CD4-positive, alpha-beta T cell (primary cell): ENCODE measurements at regions of chr14 and their contacts with region 1.

Region 1: GRCh38 chr14:97707603-97708002 is 910.4 kb downstream of the VRK1 start:
- DNase-seq: peak in 5 of 14 experiments; percentile 18 to 65 (median 51)
- ATAC-seq: peak; percentile 14
- H3K4me3 ChIP-seq: no peak overlapping the region
- H3K4me3 Mint-ChIP-seq: peak overlapping the region; percentile 16
- H3K27ac ChIP-seq: peak overlapping the region in 1 of 2 donors; percentile 29
- H3K27ac Mint-ChIP-seq: peak overlapping the region; percentile 71
- H3K4me1 ChIP-seq: peaks cover 62% of the 10 kb centered on the region
- H3K4me1 Mint-ChIP-seq: peaks cover 100% of the 10 kb centered on the region
- H3K27me3 ChIP-seq: no peaks in the 10 kb centered on the region
- H3K27me3 Mint-ChIP-seq: no peaks in the 10 kb centered on the region
- CTCF ChIP-seq: no peak

Region 2: DNA sequence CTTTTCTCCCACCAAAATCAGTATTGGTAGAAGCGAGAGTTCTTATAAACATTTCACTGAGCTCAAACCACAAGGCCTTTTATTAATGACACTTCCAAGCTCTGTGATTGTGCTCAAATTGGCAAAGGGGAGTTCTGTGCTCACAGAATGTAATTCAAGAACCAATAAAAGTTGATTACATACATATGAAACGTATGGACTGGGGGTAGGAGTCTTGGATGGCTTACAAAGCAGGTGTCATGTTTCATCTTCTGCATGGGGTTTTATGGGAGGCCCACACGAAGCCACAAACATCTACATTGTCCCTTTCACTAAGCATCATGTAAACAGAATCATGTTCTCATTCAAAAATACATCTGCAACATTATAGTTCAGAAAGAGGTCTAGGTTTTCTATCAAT is 82.1 kb before region 1 on chr14:
- CTCF ChIA-PET with region 1: no interaction called
- POLR2A ChIA-PET with region 1: no interaction called
- intact Hi-C with region 1: loop called in 1 of 2 experiments (anchors 5 kb)
- DNase-seq: no peak
- ATAC-seq: no peak
- H3K4me3 ChIP-seq: no peak overlapping the region
- H3K4me3 Mint-ChIP-seq: no peak overlapping the region
- H3K27ac ChIP-seq: no peak overlapping the region
- H3K27ac Mint-ChIP-seq: peak overlapping the region; percentile 24
- H3K4me1 ChIP-seq: peaks cover 8% of the 10 kb centered on the region
- H3K4me1 Mint-ChIP-seq: peaks cover 36% of the 10 kb centered on the region
- H3K27me3 ChIP-seq: no peaks in the 10 kb centered on the region
- H3K27me3 Mint-ChIP-seq: no peaks in the 10 kb centered on the region
- CTCF ChIP-seq: no peak

Region 3: DNA sequence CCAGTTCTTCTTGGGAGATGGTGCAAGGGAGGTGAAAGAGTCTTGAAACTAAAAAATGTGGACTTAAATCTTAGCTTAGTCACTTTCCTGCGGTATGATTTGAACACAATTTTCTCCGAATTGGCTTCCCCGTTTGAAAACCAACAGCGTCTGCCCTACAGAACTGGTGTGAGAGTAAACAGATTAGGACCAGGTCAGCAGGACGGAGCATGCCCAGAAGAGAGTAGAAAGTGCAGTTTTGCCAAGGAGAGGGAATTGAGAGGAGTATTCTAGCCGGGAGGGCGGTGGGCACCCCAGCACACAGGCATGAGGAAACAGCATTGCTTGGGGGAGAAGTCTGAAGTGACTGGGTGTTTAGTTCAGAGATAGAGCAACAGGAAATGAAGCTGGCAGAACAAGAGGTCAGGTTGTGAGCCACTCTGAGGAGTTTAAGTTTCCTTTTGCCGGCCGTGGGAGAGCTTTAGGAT is 16.7 kb after region 1 on chr14:
- CTCF ChIA-PET with region 1: no interaction called
- POLR2A ChIA-PET with region 1: interaction called, 16 read pairs
- intact Hi-C with region 1: no loop called
- DNase-seq: peak in 13 of 14 experiments; percentile 9 to 76 (median 37)
- ATAC-seq: peak; percentile 80
- H3K4me3 ChIP-seq: peak overlapping the region; percentile 36
- H3K4me3 Mint-ChIP-seq: peak overlapping the region; percentile 85
- H3K27ac ChIP-seq: peak overlapping the region; percentile 75 to 80
- H3K27ac Mint-ChIP-seq: peak overlapping the region; percentile 94
- H3K4me1 ChIP-seq: peaks cover 54% of the 10 kb centered on the region
- H3K4me1 Mint-ChIP-seq: peaks cover 90% of the 10 kb centered on the region
- H3K27me3 ChIP-seq: no peaks in the 10 kb centered on the region
- H3K27me3 Mint-ChIP-seq: no peaks in the 10 kb centered on the region
- CTCF ChIP-seq: peak; percentile 20

Region 4: GRCh38 chr14:98109326-98109725 is 401.7 kb after region 1 on chr14:
- CTCF ChIA-PET with region 1: no interaction called
- POLR2A ChIA-PET with region 1: no interaction called
- intact Hi-C with region 1: loop called in 1 of 2 experiments (anchors 5 kb)
- DNase-seq: no peak
- ATAC-seq: no peak
- H3K4me3 ChIP-seq: no peak overlapping the region
- H3K4me3 Mint-ChIP-seq: no peak overlapping the region
- H3K27ac ChIP-seq: no peak overlapping the region
- H3K27ac Mint-ChIP-seq: no peak overlapping the region
- H3K4me1 ChIP-seq: no peaks in the 10 kb centered on the region
- H3K4me1 Mint-ChIP-seq: peaks cover 7% of the 10 kb centered on the region
- H3K27me3 ChIP-seq: no peaks in the 10 kb centered on the region
- H3K27me3 Mint-ChIP-seq: no peaks in the 10 kb centered on the region
- CTCF ChIP-seq: no peak